ENCODE measurements at regions of chr5 and their contacts with region 1.

Region 1: GRCh38 chr5:73812962-73813588 is 187.1 kb downstream of the ARHGEF28 start:
- DNase-seq: peak; percentile 77
- H3K4me3 ChIP-seq: peak overlapping the region; percentile 50 to 72 (median 54)
- H3K27ac ChIP-seq: peak overlapping the region; percentile 82
- H3K4me1 ChIP-seq: peaks cover 49% of the 10 kb centered on the region
- H3K27me3 ChIP-seq: no peaks in the 10 kb centered on the region
- CTCF ChIP-seq: no peak

Region 2: GRCh38 chr5:73826301-73827105 is 13.4 kb after region 1 on chr5:
- CTCF ChIA-PET with region 1: no interaction called
- dilution Hi-C with region 1: no loop called
- in situ Hi-C with region 1: no loop called
- intact Hi-C with region 1: loop called (anchors 1 kb)
- DNase-seq: peak; percentile 98
- H3K4me3 ChIP-seq: no peak overlapping the region
- H3K27ac ChIP-seq: peak overlapping the region; percentile 91
- H3K4me1 ChIP-seq: peaks cover 68% of the 10 kb centered on the region
- H3K27me3 ChIP-seq: no peaks in the 10 kb centered on the region
- CTCF ChIP-seq: no peak

Region 3: DNA sequence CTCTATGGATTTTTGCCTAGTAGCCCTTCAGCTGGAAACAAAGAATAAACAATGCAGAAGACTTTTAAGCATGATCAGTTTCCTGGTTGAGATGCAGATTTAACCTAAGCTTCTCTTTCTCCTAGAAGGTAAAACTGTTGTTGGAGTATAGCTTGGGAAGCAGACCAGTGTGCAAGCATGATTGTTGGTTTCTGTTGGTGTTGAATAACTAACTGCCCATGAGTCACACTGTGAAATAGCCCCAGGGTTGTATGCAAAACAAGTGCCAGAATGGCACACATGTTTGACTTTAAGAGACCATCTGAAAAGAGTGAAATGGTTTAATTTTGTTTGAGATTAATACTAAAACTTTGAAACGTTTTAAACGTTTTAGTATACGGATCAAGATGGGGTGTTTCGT is 40.0 kb after region 1 on chr5:
- CTCF ChIA-PET with region 1: no interaction called
- dilution Hi-C with region 1: loop called (anchors 5 kb)
- in situ Hi-C with region 1: no loop called
- intact Hi-C with region 1: loop called (anchors 5 kb)
- DNase-seq: peak; percentile 80
- H3K4me3 ChIP-seq: no peak overlapping the region
- H3K27ac ChIP-seq: peak overlapping the region; percentile 70
- H3K4me1 ChIP-seq: peaks cover 11% of the 10 kb centered on the region
- H3K27me3 ChIP-seq: no peaks in the 10 kb centered on the region
- CTCF ChIP-seq: no peak